Transverse colon (tissue), 4 donors: ENCODE measurements at regions of chr21 and their contacts with region 1.

Region 1: DNA sequence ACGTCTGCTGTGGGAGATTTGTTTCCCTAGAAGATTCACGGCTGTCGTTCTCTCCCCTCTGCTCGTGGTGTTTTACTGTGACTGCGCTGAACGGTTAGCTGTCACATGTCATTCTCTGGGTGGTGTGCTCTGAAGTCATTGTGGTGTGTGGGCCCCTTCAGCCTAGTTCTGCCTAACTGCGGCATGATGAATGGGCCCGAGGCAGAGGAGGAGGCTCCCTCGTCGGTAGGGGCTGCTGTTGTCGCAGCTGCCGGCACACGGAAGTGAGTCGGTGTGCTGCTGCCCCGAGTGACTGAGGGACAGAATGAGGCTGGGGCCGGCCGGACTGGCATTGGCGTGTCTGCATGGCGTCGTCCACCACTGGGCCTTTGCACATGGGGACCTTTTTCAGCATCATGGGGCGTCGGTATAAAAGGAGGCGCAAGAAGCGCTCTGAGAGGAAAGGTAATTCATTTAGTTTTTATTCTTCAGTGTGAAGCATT is 77.9 kb downstream of the ADARB1 start:
- DNase-seq: peak; percentile 50
- H3K4me3 ChIP-seq: no peak overlapping the region
- H3K27ac ChIP-seq: peak overlapping the region in 2 of 4 donors; percentile 2 to 4
- H3K4me1 ChIP-seq: peaks cover 0 to 16% (median 0%) of the 10 kb centered on the region in 4 donors
- H3K27me3 ChIP-seq: no peaks in the 10 kb centered on the region
- CTCF ChIP-seq: peak in 2 of 5 experiments; percentile 10 to 17
- EP300 ChIP-seq: no peak
- POLR2A ChIP-seq: no peak

Region 2: GRCh38 chr21:44911389-44912157 is 240.7 kb before region 1 on chr21:
- in situ Hi-C with region 1: no loop called
- intact Hi-C with region 1: no loop called
- DNase-seq: peak; percentile 90
- H3K4me3 ChIP-seq: no peak overlapping the region
- H3K27ac ChIP-seq: peak overlapping the region; percentile 49 to 82 (median 66)
- H3K4me1 ChIP-seq: peaks cover 10 to 48% (median 33%) of the 10 kb centered on the region in 4 donors
- H3K27me3 ChIP-seq: no peaks in the 10 kb centered on the region
- CTCF ChIP-seq: peak; percentile 44 to 83 (median 69)
- EP300 ChIP-seq: no peak
- POLR2A ChIP-seq: no peak

Region 3: GRCh38 chr21:45000977-45001728 is 151.2 kb before region 1 on chr21:
- in situ Hi-C with region 1: no loop called
- intact Hi-C with region 1: no loop called
- DNase-seq: peak; percentile 63
- H3K4me3 ChIP-seq: no peak overlapping the region
- H3K27ac ChIP-seq: peak overlapping the region in 3 of 4 donors; percentile 47 to 69 (median 48)
- H3K4me1 ChIP-seq: peaks cover 0 to 16% (median 4%) of the 10 kb centered on the region in 4 donors
- H3K27me3 ChIP-seq: no peaks in the 10 kb centered on the region
- CTCF ChIP-seq: no peak
- EP300 ChIP-seq: no peak
- POLR2A ChIP-seq: no peak

Region 4: GRCh38 chr21:45341779-45342178 is 189.5 kb after region 1 on chr21:
- in situ Hi-C with region 1: no loop called
- intact Hi-C with region 1: no loop called
- DNase-seq: no peak
- H3K4me3 ChIP-seq: no peak overlapping the region
- H3K27ac ChIP-seq: no peak overlapping the region
- H3K4me1 ChIP-seq: no peaks in the 10 kb centered on the region
- H3K27me3 ChIP-seq: no peaks in the 10 kb centered on the region
- CTCF ChIP-seq: no peak
- EP300 ChIP-seq: no peak
- POLR2A ChIP-seq: no peak

Region 5: GRCh38 chr21:45439161-45439872 is 287.0 kb after region 1 on chr21:
- in situ Hi-C with region 1: loop called in 2 of 4 experiments (anchors 10 to 25 kb)
- intact Hi-C with region 1: loop called (anchors 5 kb)
- DNase-seq: peak; percentile 83
- H3K4me3 ChIP-seq: peak overlapping the region in 2 of 4 donors; percentile 19 to 41
- H3K27ac ChIP-seq: peak overlapping the region; percentile 65 to 73 (median 70)
- H3K4me1 ChIP-seq: peaks cover 0 to 13% (median 8%) of the 10 kb centered on the region in 4 donors
- H3K27me3 ChIP-seq: no peaks in the 10 kb centered on the region
- CTCF ChIP-seq: peak; percentile 97 to 98 (median 98)
- EP300 ChIP-seq: peak; percentile 63
- POLR2A ChIP-seq: no peak

Region 6: GRCh38 chr21:45470773-45471524 is 318.6 kb after region 1 on chr21:
- in situ Hi-C with region 1: loop called in 1 of 4 experiments (anchors 25 kb)
- intact Hi-C with region 1: no loop called
- DNase-seq: no peak
- H3K4me3 ChIP-seq: no peak overlapping the region
- H3K27ac ChIP-seq: peak overlapping the region; percentile 77 to 86 (median 81)
- H3K4me1 ChIP-seq: peaks cover 6 to 33% (median 13%) of the 10 kb centered on the region in 4 donors
- H3K27me3 ChIP-seq: no peaks in the 10 kb centered on the region
- CTCF ChIP-seq: no peak
- EP300 ChIP-seq: no peak
- POLR2A ChIP-seq: no peak